CD4-positive, alpha-beta T cell (primary cell): ENCODE measurements at regions of chr16 and their contacts with region 1.

Region 1: DNA sequence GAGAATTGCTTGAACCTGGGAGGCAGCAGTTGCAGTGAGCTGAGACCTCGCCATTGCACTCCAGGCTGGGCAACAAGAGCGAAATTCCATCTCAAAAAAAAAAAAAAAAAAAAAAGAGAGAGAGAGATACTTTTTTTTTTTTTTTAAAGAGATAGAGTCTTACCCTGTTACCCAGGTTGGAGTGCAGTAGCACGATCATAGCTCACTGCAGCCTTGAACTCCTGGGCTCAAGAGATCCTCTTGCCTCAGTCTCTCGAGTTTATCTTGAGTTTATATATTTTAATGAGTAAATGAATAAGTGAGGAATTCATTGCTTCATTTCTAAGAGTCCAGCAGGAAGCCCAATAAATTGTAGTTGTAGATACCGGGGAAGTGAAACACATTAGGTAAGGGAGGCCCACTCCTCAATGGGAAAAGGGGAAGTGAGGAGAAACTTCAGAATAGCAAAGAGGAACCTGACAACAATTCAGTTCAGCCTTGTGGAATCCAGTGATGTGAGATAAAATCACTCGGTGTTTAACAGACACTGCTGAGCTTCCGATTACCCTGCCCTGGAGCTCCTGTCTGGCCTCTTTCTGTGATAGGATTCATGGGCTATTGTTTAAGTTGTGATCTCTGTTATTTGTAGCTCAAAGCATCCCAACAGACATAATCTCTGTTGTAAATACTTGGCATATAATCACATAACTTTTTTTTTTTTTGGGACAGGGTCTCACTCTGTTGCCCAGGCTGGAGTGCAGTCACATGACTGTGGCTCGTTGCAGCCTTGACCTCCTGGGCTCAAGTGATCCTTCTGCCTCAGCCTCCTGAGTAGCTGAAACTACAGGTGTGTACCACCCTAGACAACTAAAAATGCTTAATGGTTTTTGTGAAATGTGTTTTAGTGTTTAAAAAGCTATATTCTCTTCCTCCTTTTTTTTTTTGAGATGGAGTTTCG is 15.8 kb upstream of the ITGAM start:
- DNase-seq: peak in 3 of 14 experiments; percentile 24 to 53 (median 47)
- ATAC-seq: no peak
- H3K4me3 ChIP-seq: no peak overlapping the region
- H3K4me3 Mint-ChIP-seq: no peak overlapping the region
- H3K27ac ChIP-seq: no peak overlapping the region
- H3K27ac Mint-ChIP-seq: no peak overlapping the region
- H3K4me1 ChIP-seq: no peaks in the 10 kb centered on the region
- H3K4me1 Mint-ChIP-seq: no peaks in the 10 kb centered on the region
- H3K27me3 ChIP-seq: no peaks in the 10 kb centered on the region
- H3K27me3 Mint-ChIP-seq: no peaks in the 10 kb centered on the region
- CTCF ChIP-seq: no peak

Region 2: GRCh38 chr16:31286421-31287032 is 42.5 kb after region 1 on chr16:
- CTCF ChIA-PET with region 1: no interaction called
- POLR2A ChIA-PET with region 1: no interaction called
- intact Hi-C with region 1: no loop called
- DNase-seq: no peak
- ATAC-seq: no peak
- H3K4me3 ChIP-seq: no peak overlapping the region
- H3K4me3 Mint-ChIP-seq: no peak overlapping the region
- H3K27ac ChIP-seq: no peak overlapping the region
- H3K27ac Mint-ChIP-seq: no peak overlapping the region
- H3K4me1 ChIP-seq: peaks cover 3% of the 10 kb centered on the region
- H3K4me1 Mint-ChIP-seq: no peaks in the 10 kb centered on the region
- H3K27me3 ChIP-seq: peaks cover 0 to 2% of the 10 kb centered on the region in 2 experiments
- H3K27me3 Mint-ChIP-seq: peaks cover 35% of the 10 kb centered on the region
- CTCF ChIP-seq: no peak

Region 3: GRCh38 chr16:31344712-31345111 is 100.7 kb after region 1 on chr16:
- CTCF ChIA-PET with region 1: no interaction called
- POLR2A ChIA-PET with region 1: no interaction called
- intact Hi-C with region 1: no loop called
- DNase-seq: no peak
- ATAC-seq: no peak
- H3K4me3 ChIP-seq: no peak overlapping the region
- H3K4me3 Mint-ChIP-seq: no peak overlapping the region
- H3K27ac ChIP-seq: no peak overlapping the region
- H3K27ac Mint-ChIP-seq: no peak overlapping the region
- H3K4me1 ChIP-seq: peaks cover 3% of the 10 kb centered on the region
- H3K4me1 Mint-ChIP-seq: no peaks in the 10 kb centered on the region
- H3K27me3 ChIP-seq: no peaks in the 10 kb centered on the region
- H3K27me3 Mint-ChIP-seq: peaks cover 3% of the 10 kb centered on the region
- CTCF ChIP-seq: no peak

Region 4: DNA sequence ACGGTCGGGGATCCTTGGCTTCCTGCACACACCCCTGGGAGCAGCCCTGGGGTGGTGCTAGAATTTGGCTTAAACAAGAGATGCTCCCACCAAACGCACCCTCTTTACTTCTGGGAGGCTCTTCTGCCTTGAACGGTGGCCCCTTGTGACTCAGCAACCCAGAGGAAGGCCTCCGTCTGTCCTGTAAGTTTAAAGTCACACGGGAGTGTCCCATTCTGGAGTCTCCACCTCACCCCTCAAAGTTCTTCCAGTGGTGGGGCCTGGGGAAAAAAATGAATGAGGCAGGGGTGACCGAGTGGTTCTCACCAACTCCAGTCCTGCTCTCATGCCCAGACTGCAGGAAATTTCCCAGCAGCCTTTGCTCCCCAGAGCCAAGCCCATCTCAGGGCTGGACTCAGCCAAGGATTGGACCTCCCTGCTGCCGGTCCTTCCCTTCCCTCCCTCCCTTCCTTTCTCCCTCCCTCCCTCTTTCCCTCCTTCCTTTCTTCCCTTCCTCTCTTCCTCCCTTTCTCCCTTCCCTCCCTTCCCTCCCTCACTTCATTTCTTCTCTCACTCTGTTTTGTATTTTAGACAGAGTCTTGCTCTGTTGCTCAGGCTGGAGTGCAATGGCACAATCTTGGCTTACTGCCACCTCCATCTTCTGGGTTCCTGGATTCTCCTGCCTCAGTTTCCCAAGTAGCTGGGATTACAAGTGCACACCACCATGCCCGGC is 160.5 kb after region 1 on chr16:
- CTCF ChIA-PET with region 1: no interaction called
- POLR2A ChIA-PET with region 1: no interaction called
- intact Hi-C with region 1: loop called in 1 of 2 experiments (anchors 10 kb)
- DNase-seq: no peak
- ATAC-seq: no peak
- H3K4me3 ChIP-seq: no peak overlapping the region
- H3K4me3 Mint-ChIP-seq: no peak overlapping the region
- H3K27ac ChIP-seq: no peak overlapping the region
- H3K27ac Mint-ChIP-seq: no peak overlapping the region
- H3K4me1 ChIP-seq: peaks cover 10% of the 10 kb centered on the region
- H3K4me1 Mint-ChIP-seq: no peaks in the 10 kb centered on the region
- H3K27me3 ChIP-seq: no peaks in the 10 kb centered on the region
- H3K27me3 Mint-ChIP-seq: no peaks in the 10 kb centered on the region
- CTCF ChIP-seq: no peak